GM10248 (cell line): ENCODE measurements at regions of chr19 and their contacts with region 1.

Region 1: GRCh38 chr19:9934132-9934950 is 2.0 kb downstream of the OLFM2 start:
- DNase-seq: peak; percentile 87
- CTCF ChIP-seq: peak; percentile 90

Region 2: DNA sequence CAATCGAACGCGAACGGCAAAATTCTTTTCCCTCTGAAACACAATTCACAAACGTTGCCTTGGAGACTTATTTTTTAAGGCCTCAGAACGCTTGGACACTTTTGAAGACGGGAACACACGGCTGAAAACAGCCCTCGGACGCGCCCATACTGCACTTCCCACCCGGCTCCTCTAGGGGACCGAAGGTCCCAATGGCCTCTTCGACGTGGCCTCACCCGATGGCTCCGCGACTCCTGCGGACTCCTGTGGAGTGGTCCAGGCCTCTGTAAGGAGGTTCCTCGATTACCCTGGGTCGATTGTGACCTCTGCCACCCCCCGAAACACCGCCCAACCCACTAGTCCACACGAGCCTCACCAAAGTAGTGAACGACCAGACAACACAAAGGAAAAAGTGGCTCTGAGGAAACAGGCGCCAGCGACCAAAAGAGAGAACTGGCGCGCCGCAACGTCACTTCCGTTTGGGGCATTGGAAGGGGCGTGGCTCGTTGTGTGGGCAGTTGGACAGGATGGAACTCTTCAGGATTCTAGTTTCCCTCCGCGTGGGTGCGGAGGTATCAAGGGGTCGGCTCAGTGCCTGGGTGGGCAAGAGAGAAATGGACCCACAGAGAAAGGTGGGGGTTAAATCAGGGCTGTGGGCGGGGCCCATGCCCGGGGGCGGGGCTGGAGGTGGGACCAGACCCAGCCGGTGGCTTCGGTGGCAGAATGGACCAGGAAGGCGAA is 436.0 kb before region 1 on chr19 and contains the start of gene ZNF560:
- CTCF ChIA-PET with region 1: no interaction called
- POLR2A ChIA-PET with region 1: no interaction called
- DNase-seq: no peak
- CTCF ChIP-seq: no peak

Region 3: GRCh38 chr19:9847087-9847671 is 87.2 kb before region 1 on chr19:
- CTCF ChIA-PET with region 1: no interaction called
- POLR2A ChIA-PET with region 1: no interaction called
- DNase-seq: no peak
- CTCF ChIP-seq: peak; percentile 25

Region 4: GRCh38 chr19:9871626-9872338 is 62.6 kb before region 1 on chr19:
- CTCF ChIA-PET with region 1: no interaction called
- POLR2A ChIA-PET with region 1: no interaction called
- DNase-seq: no peak
- CTCF ChIP-seq: no peak

Region 5: DNA sequence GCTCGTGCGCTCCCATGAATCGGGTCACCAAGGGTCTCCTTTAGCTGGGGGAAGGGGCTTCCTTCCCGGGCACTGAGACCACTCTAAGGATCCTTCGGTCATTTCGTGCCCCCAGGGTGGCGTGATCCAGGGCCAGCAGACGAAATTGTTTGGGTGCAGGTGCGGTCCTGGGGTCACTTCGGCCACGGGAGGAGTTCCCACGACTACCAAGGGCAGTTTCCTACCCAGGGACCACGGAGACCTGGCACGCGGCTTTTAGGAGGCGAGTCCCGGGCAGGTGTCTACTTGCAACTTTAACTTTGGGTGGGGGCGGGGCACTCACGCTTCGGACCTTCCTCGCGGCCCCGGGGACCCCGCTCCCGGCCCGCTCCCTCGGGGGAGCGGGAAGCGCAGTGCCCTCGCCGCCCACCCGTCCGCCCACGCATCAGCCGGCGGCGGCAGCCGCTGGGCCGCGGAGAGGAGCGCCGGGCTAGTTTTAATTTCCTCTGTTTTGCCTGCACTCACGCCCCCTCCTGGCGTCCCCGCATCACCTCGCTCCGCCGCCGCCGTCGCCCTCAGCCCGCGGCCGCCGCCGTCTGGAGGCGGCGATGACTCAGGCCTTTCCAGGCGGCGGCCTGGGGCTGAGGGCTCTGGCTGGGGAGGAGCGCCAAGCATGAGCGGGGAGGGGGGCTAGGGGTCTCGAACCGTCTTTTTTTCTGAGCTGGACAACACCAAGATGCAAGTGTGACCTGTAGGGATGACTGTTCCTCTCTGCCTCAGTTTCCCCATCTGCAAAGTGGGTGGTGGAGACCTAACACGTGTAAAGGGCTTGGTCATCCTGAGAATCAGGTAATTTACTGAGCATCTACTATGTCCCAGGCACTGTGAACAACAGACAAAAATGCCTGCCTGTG is 19.8 kb before region 1 on chr19:
- CTCF ChIA-PET with region 1: interaction called, 18 read pairs
- POLR2A ChIA-PET with region 1: no interaction called
- DNase-seq: peak; percentile 87
- CTCF ChIP-seq: peak; percentile 85

Region 6: GRCh38 chr19:10000171-10000826 is 66.0 kb after region 1 on chr19:
- CTCF ChIA-PET with region 1: interaction called, 41 read pairs
- POLR2A ChIA-PET with region 1: no interaction called
- DNase-seq: peak; percentile 86
- CTCF ChIP-seq: peak; percentile 76

Region 7: GRCh38 chr19:10112895-10113591 is 178.7 kb after region 1 on chr19:
- CTCF ChIA-PET with region 1: interaction called, 11 read pairs
- POLR2A ChIA-PET with region 1: no interaction called
- DNase-seq: peak; percentile 59
- CTCF ChIP-seq: peak; percentile 81

Region 8: DNA sequence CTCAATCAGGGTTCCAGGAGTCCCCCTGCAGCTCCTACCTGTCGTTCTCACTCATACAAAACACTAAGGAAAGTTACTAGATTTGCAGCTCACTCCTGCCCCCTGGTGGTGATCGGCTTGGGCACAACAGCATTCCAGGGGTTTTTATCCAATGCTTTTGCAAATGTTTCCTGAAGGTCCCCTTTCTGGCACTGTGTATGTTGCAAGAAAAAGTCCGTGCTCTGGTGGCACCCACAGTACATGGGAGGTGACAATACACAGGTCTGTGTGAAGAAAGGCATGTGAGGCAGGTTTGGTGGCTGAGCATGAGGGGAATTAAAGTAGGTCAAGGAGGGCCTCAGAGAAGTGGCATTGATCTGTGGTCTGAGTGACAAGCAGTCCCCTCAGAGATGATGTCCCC is 454.6 kb after region 1 on chr19:
- CTCF ChIA-PET with region 1: interaction called, 22 read pairs
- POLR2A ChIA-PET with region 1: no interaction called
- DNase-seq: peak; percentile 66
- CTCF ChIP-seq: peak; percentile 88